Activated naive CD4-positive, alpha-beta T cell treated with anti-CD3 and anti-CD28 coated beads for 36 hours (primary cell): ENCODE measurements at regions of chr2 and their contacts with region 1.

Region 1: DNA sequence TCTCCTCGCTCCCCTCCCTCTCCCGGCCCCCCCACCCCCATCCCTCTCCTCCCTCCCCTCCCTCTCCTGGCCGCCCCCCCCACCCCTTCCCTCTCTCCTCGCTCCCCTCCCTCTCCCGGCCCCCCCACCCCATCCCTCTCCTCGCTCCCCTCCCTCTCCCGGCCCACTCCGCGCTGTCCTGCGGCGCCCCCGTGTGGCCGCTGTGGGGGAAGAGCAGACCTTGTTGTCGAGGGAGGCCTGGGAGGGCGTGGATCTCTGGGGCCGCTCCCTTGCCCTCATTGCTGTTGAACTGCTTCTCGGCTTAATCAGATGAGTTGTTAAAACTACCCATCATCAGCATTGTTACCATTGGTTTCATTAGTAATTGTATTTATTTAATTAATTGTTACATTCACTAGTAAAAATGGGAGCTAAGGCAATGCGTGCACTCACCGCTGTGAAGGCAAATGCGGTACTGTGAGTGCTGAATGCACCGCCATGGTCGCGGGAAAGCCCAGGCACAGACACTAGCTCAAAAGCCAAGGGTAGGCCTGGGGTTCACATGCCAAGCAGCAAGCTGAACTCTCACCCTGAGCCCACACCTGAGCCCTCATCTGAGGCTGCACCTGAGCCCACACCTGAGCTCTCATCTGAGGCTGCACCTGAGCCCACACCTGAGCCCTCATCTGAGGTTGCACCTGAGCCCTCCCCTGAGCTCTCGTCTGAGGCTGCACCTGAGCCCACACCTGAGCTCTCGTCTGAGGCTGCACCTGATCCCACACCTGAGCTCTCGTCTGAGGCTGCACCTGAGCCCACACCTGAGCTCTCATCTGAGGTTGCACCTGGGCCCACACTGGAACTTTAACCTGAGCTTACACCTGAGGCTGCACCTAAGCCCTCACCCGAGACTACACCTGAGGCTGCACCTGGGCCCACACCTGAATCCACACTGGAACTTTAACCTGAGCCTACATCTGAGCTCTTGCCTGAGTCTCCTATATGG is 8.8 kb downstream of the RTP5 start:
- DNase-seq: peak; percentile 80
- H3K4me3 Mint-ChIP-seq: no peak overlapping the region
- H3K27ac Mint-ChIP-seq: no peak overlapping the region
- H3K4me1 Mint-ChIP-seq: peaks cover 24% of the 10 kb centered on the region
- H3K27me3 Mint-ChIP-seq: no peaks in the 10 kb centered on the region

Region 2: DNA sequence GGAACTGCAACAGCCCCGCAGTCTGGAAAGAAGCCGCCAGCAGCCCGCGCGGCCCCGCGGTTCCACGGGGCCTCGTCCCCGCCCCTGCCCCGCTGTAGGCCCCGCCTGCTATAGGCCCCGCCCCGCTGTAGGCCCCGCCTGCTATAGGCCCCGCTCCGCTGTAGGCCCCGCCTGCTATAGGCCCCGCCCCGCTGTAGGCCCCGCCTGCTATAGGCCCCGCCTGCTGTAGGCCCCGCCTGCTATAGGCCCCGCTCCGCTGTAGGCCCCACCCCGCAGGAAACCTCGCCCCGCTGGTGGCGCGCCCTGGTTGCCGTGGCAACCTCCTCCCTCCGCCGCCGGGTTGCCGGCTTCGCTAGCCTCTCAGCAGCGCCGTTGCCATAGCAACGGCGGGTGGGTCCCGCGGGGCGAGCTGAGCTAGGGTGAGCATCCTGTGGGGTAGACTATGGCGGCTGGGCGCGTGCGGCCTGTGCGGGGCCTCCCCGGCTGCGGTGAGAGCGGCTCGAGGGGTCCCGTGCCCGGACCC is 1046.0 kb before region 1 on chr2:
- CTCF ChIA-PET with region 1: no interaction called
- intact Hi-C with region 1: loop called (anchors 1 kb)
- DNase-seq: peak; percentile 96
- H3K4me3 Mint-ChIP-seq: peak overlapping the region; percentile 70
- H3K27ac Mint-ChIP-seq: no peak overlapping the region
- H3K4me1 Mint-ChIP-seq: peaks cover 5% of the 10 kb centered on the region
- H3K27me3 Mint-ChIP-seq: peaks cover 17% of the 10 kb centered on the region

Region 3: DNA sequence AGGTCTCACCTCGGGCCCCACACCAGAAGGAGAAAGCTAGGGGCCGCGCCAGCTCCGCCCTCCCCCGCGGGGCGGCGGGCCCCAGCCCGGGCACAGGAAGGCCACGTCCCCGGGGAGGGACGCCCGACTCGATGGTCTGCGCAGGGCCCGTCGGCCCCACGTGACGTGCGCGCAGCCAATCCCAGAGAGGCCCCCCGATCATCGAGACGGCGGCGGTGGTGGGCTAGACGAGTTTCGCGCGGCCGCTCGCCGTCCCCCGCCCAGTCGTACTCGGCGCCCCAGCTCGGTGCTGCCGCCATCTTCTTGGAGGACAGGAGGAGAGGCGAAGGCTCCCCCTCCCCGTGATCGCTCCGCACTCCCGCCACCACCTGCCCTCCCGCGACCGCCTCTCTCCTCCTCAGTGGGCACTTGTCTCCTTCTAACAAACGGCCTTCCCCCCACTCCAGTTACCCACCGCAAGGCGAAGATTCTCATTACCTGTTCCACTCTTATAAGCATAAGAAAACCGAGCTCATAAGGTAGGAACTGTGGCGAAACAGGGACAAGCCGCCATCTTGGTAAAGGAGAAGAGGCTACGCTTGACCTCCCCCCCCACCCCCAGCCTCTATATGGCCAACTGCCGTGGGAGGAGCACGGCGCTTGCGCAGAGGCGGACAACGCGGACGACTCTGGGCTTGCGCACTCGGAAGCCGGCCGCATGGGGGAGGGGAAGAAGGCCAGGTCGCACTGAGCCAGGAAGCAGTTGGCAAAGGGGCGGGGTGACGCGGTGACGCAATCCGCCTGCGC is 563.0 kb before region 1 on chr2 and contains the start of gene HDLBP:
- CTCF ChIA-PET with region 1: no interaction called
- intact Hi-C with region 1: loop called (anchors 1 kb)
- DNase-seq: peak; percentile 100
- H3K4me3 Mint-ChIP-seq: peak within 1 kb of the TSS; percentile 100
- H3K27ac Mint-ChIP-seq: peak within 1 kb of the TSS; percentile 100
- H3K4me1 Mint-ChIP-seq: peaks cover 71% of the 10 kb centered on the region
- H3K27me3 Mint-ChIP-seq: no peaks in the 10 kb centered on the region
- total RNA-seq, gene HDLBP: 278 to 297 TPM

Region 4: DNA sequence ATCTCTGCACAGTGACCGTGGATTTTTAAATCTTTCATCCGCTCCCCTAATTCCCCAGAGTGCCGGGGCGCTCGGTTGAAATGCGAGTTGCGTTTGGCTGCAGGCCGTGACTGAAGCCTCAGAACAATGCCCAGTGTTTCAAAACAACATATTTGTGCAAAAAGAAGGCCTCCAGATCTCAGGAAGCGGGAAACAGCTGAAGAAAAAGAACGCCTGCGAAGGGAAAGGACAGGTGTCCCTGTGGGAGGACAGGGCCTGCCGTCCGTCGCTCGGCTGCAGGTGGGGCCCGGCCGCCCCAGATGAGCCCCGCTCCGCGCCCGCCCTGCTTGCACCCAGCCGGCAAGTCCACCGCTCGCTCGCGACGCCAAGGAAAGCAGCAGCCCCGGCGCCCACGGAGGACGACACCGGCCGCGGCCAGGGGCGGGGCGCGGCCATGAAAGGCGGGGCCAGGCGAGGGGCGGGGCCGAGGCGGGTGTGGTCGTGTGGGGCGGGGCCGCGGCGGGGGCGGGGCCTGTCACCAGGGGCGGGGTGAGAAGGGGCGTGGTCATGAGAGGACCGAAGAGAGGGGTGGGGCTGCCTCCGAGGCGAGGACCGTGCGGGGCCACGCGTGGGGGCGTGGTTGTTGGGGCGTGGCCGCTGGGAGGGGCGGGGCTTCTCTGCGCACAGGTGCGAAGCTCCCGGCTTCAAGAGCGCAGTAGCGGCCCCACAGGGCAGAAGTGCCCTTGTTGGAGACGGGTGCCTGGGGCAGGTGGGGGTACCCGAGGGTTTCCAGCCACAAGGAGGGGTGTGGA is 337.3 kb before region 1 on chr2:
- CTCF ChIA-PET with region 1: no interaction called
- intact Hi-C with region 1: loop called (anchors 2 kb)
- DNase-seq: peak; percentile 55
- H3K4me3 Mint-ChIP-seq: no peak overlapping the region
- H3K27ac Mint-ChIP-seq: no peak overlapping the region
- H3K4me1 Mint-ChIP-seq: peaks cover 4% of the 10 kb centered on the region
- H3K27me3 Mint-ChIP-seq: peaks cover 19% of the 10 kb centered on the region

Region 5: GRCh38 chr2:241702132-241703031 is 175.9 kb before region 1 on chr2:
- CTCF ChIA-PET with region 1: interaction called, 10 read pairs
- intact Hi-C with region 1: loop called (anchors 1 kb)
- DNase-seq: peak; percentile 82
- H3K4me3 Mint-ChIP-seq: peak overlapping the region; percentile 82
- H3K27ac Mint-ChIP-seq: peak overlapping the region; percentile 61
- H3K4me1 Mint-ChIP-seq: peaks cover 24% of the 10 kb centered on the region
- H3K27me3 Mint-ChIP-seq: no peaks in the 10 kb centered on the region

Region 6: GRCh38 chr2:241771286-241772062 is 106.8 kb before region 1 on chr2:
- CTCF ChIA-PET with region 1: interaction called, 12 read pairs
- intact Hi-C with region 1: no loop called
- DNase-seq: no peak
- H3K4me3 Mint-ChIP-seq: no peak overlapping the region
- H3K27ac Mint-ChIP-seq: peak overlapping the region; percentile 47
- H3K4me1 Mint-ChIP-seq: peaks cover 13% of the 10 kb centered on the region
- H3K27me3 Mint-ChIP-seq: no peaks in the 10 kb centered on the region

Region 7: GRCh38 chr2:241853651-241854341 is 24.5 kb before region 1 on chr2:
- CTCF ChIA-PET with region 1: no interaction called
- intact Hi-C with region 1: no loop called
- DNase-seq: peak; percentile 4
- H3K4me3 Mint-ChIP-seq: no peak overlapping the region
- H3K27ac Mint-ChIP-seq: no peak overlapping the region
- H3K4me1 Mint-ChIP-seq: peaks cover 17% of the 10 kb centered on the region
- H3K27me3 Mint-ChIP-seq: no peaks in the 10 kb centered on the region

Region 8: DNA sequence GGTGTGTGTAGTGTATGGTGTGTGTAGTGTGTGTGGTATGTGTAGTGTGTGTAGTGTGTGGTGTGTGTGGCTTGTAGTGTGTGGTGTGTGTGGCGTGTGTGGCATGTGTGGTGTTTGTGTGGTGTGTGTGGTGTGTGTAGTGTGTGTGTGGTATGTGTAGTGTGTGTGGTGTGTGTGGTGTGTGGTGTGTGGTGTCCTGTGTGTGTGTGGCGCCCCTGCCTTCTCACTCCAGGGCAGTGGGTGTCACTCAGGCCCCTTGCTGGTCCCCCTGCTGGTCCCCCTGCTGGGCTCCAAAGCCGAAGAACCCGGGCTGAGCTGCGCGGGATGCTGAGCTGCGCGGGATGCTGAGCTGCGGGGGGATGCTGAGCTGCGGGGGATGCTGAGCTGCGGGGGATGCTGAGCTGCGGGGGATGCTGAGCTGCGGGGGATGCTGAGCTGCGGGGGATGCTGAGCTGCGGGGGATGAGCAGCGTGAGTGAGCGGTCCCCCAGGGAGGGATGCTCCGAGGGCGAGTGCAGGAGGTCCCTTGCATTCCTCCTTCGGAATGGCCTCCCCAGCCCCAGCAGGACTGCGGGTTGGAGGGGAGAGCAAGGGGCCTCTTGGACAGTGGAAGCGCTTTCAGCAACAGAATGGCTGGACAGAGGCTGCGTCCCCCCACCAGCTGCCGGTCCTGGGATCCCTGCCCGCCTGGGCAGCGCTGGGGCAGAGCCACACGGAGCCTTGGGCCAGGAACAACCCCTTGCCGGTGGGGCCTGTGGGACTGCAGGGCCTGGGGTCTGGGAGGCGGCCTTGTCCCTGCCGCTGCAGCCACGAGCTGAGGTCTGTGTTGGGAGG is 12.1 kb before region 1 on chr2:
- CTCF ChIA-PET with region 1: interaction called, 31 read pairs
- intact Hi-C with region 1: no loop called
- DNase-seq: peak; percentile 63
- H3K4me3 Mint-ChIP-seq: no peak overlapping the region
- H3K27ac Mint-ChIP-seq: no peak overlapping the region
- H3K4me1 Mint-ChIP-seq: peaks cover 69% of the 10 kb centered on the region
- H3K27me3 Mint-ChIP-seq: peaks cover 14% of the 10 kb centered on the region

Region 9: DNA sequence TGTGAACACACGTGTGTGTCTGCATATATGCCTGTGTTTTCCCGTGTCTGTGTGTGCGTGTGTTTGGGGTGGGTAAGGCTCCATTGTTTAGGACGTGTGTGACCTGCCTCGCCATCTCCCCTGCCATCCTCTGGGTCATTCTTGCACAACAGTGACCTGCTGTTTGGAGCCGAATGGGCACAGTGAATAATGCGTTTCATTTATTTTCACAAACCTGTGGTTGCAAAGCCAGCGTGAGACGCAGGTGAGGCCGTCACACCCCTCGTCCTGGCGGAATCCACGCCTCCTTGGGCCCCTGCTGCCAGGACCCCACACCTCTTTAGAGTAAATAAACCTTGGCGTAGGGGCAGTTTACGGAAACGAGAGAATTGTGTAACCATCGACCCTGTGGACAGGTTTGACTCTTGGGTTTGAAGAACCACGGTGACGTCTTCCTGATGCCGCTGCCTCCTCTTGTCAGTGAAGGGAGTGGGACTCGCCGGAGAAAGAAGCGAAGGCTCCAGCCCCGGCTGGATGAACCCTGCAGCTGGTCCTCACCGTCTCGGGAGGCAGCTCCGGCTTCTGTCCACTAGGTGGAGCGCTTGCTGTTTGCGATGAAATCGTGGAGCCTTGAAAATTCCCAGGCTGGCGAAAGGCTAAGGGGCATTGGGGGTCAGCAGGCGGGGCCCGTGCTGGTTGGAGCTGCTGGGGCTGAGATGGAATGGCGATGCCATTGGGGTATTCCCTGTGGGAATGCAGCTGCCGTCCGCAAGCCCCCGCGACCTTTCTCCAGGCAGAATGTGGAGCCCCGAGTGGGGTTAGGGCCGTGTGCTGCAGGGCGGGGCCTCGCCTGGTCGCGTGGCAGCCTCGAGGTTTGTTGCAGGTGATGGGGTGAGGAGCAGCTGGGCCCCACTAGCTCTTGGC is 72.4 kb after region 1 on chr2:
- CTCF ChIA-PET with region 1: no interaction called
- intact Hi-C with region 1: no loop called
- DNase-seq: peak; percentile 71
- H3K4me3 Mint-ChIP-seq: no peak overlapping the region
- H3K27ac Mint-ChIP-seq: no peak overlapping the region
- H3K4me1 Mint-ChIP-seq: peaks cover 7% of the 10 kb centered on the region
- H3K27me3 Mint-ChIP-seq: no peaks in the 10 kb centered on the region

Region 10: DNA sequence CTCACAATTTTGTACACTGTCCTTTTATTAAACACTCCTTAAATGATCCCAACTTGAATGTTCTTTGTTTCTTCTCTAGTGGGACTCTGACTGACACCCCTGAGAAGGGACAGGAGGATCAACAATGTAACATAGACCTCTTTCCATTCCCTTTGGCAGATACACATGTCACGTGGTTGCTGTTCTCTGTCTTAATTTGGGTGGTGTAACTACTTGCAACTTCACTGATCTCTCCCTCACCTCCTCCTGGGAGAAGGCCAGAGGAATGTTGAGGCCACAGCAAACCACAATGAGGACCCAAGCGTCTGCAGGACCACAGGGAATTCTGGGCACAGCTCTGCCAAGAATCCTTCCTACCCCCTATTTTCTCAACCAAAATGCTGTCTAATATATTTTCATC is 196.9 kb after region 1 on chr2:
- CTCF ChIA-PET with region 1: no interaction called
- intact Hi-C with region 1: no loop called
- DNase-seq: no peak
- H3K4me3 Mint-ChIP-seq: no peak overlapping the region
- H3K27ac Mint-ChIP-seq: no peak overlapping the region
- H3K4me1 Mint-ChIP-seq: no peaks in the 10 kb centered on the region
- H3K27me3 Mint-ChIP-seq: peaks cover 3% of the 10 kb centered on the region